Panc1 (cell line): ENCODE measurements at regions of chr7 and their contacts with region 1.

Region 1: DNA sequence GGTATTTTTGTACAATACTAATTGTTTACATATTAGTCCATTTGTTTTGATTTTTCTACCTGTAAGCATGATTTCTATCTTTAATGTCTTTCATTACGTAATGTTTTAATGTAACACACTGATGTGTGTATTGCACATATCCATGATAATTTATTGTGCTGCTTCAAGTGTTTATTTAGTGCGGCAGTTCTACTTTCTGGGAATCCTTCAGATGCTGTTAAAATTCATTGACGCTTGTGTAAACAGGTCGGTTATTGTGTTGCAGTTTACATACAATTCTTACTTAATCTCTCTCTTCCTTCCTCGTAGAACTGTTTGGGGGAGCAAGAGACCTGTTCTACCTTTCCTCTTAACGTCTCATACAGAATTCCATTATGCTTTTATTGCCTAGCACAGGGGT is 6.9 kb downstream of the TMEM60 start:
- DNase-seq: no peak
- ATAC-seq: no peak
- H3K4me3 ChIP-seq: no peak overlapping the region
- H3K27ac ChIP-seq: no peak overlapping the region
- H3K4me1 ChIP-seq: peaks cover 14% of the 10 kb centered on the region; the same call in 1 of the 2 replicates
- H3K27me3 ChIP-seq: no peaks in the 10 kb centered on the region
- CTCF ChIP-seq: no peak

Region 2: DNA sequence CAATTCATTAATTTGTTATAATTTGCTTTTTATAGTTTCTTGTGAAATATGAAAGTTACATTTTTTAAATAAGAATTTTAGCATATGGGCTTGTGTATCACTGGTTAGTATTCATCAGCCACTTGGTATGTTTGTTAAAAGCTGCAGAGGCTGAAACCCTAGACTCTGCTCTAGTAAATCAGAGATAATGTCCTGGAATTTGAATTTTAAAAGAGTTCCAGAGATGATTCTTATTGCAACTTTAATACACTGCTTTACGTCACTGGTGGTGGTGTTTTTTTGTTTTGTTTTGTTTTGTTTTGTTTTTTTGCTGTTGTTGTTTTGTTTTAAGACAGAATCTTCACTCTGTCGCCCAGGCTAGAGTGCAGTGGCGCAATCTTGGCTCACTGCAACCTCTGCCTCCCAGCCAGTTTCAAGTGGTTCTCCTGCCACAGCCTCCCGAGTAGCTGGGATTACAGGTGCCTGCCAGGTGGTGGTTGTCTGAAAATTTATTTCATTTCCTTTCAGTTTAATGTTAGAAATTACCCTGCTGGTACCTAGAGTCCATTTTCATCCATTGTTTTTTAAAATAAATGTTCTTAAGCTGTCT is 210.5 kb before region 1 on chr7:
- CTCF ChIA-PET with region 1: no interaction called
- POLR2A ChIA-PET with region 1: interaction called, 11 read pairs
- in situ Hi-C with region 1: no loop called
- intact Hi-C with region 1: no loop called
- DNase-seq: no peak
- ATAC-seq: no peak
- H3K4me3 ChIP-seq: no peak overlapping the region
- H3K27ac ChIP-seq: no peak overlapping the region
- H3K4me1 ChIP-seq: no peaks in the 10 kb centered on the region
- H3K27me3 ChIP-seq: no peaks in the 10 kb centered on the region
- CTCF ChIP-seq: no peak

Region 3: GRCh38 chr7:79050603-79051002 is 1259.3 kb after region 1 on chr7:
- CTCF ChIA-PET with region 1: no interaction called
- POLR2A ChIA-PET with region 1: no interaction called
- in situ Hi-C with region 1: no loop called
- intact Hi-C with region 1: no loop called
- DNase-seq: no peak
- ATAC-seq: no peak
- H3K4me3 ChIP-seq: no peak overlapping the region
- H3K27ac ChIP-seq: no peak overlapping the region
- H3K4me1 ChIP-seq: no peaks in the 10 kb centered on the region
- H3K27me3 ChIP-seq: no peaks in the 10 kb centered on the region
- CTCF ChIP-seq: no peak